CD4-positive, alpha-beta memory T cell (primary cell): ENCODE measurements at regions of chr19 and their contacts with region 1.

Region 1: GRCh38 chr19:55088543-55089341 is 13.1 kb downstream of the EPS8L1 start:
- DNase-seq: peak; percentile 56 to 71 (median 59)
- H3K4me3 ChIP-seq: no peak overlapping the region
- H3K4me3 Mint-ChIP-seq: peak overlapping the region; percentile 18 to 89 (median 68)
- H3K27ac ChIP-seq: no peak overlapping the region
- H3K27ac Mint-ChIP-seq: peak overlapping the region in 2 of 7 donors; percentile 68 to 71
- H3K4me1 ChIP-seq: peaks cover 22% of the 10 kb centered on the region
- H3K4me1 Mint-ChIP-seq: peaks cover 12 to 35% (median 18%) of the 10 kb centered on the region in 4 donors
- H3K27me3 ChIP-seq: peaks cover 12% of the 10 kb centered on the region
- H3K27me3 Mint-ChIP-seq: peaks cover 23 to 41% of the 10 kb centered on the region in 2 donors

Region 2: GRCh38 chr19:55106591-55106990 is 17.8 kb after region 1 on chr19:
- CTCF ChIA-PET with region 1: interaction called, 11 read pairs
- POLR2A ChIA-PET with region 1: no interaction called
- intact Hi-C with region 1: no loop called
- DNase-seq: no peak
- H3K4me3 ChIP-seq: no peak overlapping the region
- H3K4me3 Mint-ChIP-seq: no peak overlapping the region
- H3K27ac ChIP-seq: no peak overlapping the region
- H3K27ac Mint-ChIP-seq: peak overlapping the region in 1 of 7 donors; percentile 32
- H3K4me1 ChIP-seq: no peaks in the 10 kb centered on the region
- H3K4me1 Mint-ChIP-seq: peaks cover 0 to 6% (median 4%) of the 10 kb centered on the region in 4 donors
- H3K27me3 ChIP-seq: no peaks in the 10 kb centered on the region
- H3K27me3 Mint-ChIP-seq: no peaks in the 10 kb centered on the region

Region 3: GRCh38 chr19:55418185-55418584 is 329.4 kb after region 1 on chr19:
- CTCF ChIA-PET with region 1: interaction called, 10 read pairs
- POLR2A ChIA-PET with region 1: no interaction called
- intact Hi-C with region 1: no loop called
- DNase-seq: peak; percentile 54 to 61 (median 60)
- H3K4me3 ChIP-seq: no peak overlapping the region
- H3K4me3 Mint-ChIP-seq: no peak overlapping the region
- H3K27ac ChIP-seq: no peak overlapping the region
- H3K27ac Mint-ChIP-seq: peak overlapping the region in 3 of 7 donors; percentile 48 to 74 (median 68)
- H3K4me1 ChIP-seq: peaks cover 25% of the 10 kb centered on the region
- H3K4me1 Mint-ChIP-seq: peaks cover 9 to 29% (median 20%) of the 10 kb centered on the region in 4 donors
- H3K27me3 ChIP-seq: no peaks in the 10 kb centered on the region
- H3K27me3 Mint-ChIP-seq: peaks cover 0 to 3% of the 10 kb centered on the region in 2 donors